Activated T-helper 1 cell treated with anti-CD3 and anti-CD28 coated beads, Interleukin-12 subunit alpha, Interleukin-12 subunit beta, Interleukin-2, Interleukin-4 antibody, amounts not matched to agents 30 ng/mL and 10 ng/mL and 1 ng/mL, durations not matched to agents 14 hours and 24 hours and 36 hours (primary cell): ENCODE measurements at regions of chr1 and their contacts with region 1.

Region 1: DNA sequence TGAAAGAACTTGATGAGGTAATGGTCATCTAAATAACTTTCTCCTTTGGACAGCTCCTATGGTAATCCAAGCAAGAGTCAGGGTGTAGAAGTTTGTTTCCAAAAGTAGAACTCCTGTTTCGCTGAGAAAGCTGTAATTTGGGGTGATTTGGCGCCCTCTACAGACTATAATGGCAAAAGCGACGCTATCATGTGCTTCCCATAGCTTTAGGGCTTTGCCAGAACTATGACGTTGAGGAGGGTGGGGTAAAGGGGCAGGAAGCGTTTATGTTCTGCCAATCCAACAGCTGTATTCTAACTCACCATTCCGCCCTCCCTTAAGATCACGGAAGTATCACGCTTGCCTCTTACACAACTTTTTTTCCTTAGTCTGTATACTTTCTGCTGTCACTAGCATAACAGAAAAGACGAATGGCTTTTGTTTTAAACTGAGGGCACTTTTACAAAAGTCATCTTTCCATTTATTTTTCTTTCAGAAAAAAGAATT is at the start of gene FMO4:
- DNase-seq: peak; percentile 79
- H3K4me3 Mint-ChIP-seq: peak within 1 kb of the TSS; percentile 72
- H3K27ac Mint-ChIP-seq: peak within 1 kb of the TSS; percentile 54
- H3K4me1 Mint-ChIP-seq: peaks cover 15% of the 10 kb centered on the region
- H3K27me3 Mint-ChIP-seq: no peaks in the 10 kb centered on the region
- total RNA-seq, gene FMO4: 0.39 and 1.5 TPM in 2 replicates

Region 2: GRCh38 chr1:170074250-170075157 is 1239.4 kb before region 1 on chr1 and contains the start of gene KIFAP3:
- intact Hi-C with region 1: loop called (anchors 1 kb)
- DNase-seq: peak; percentile 95
- H3K4me3 Mint-ChIP-seq: peak within 1 kb of the TSS; percentile 95
- H3K27ac Mint-ChIP-seq: peak within 1 kb of the TSS; percentile 96
- H3K4me1 Mint-ChIP-seq: peaks cover 45% of the 10 kb centered on the region
- H3K27me3 Mint-ChIP-seq: no peaks in the 10 kb centered on the region
- total RNA-seq, gene KIFAP3: 12.9 and 13.5 TPM in 2 replicates

Region 3: GRCh38 chr1:170531758-170532657 is 781.9 kb before region 1 on chr1 and contains the start of gene GORAB:
- intact Hi-C with region 1: loop called (anchors 10 kb)
- DNase-seq: peak; percentile 82
- H3K4me3 Mint-ChIP-seq: no peak within 1 kb of the TSS
- H3K27ac Mint-ChIP-seq: no peak within 1 kb of the TSS
- H3K4me1 Mint-ChIP-seq: peaks cover 8% of the 10 kb centered on the region
- H3K27me3 Mint-ChIP-seq: peaks cover 4% of the 10 kb centered on the region
- total RNA-seq, gene GORAB: 11.8 and 12.2 TPM in 2 replicates

Region 4: GRCh38 chr1:171081314-171081753 is 232.5 kb before region 1 on chr1:
- intact Hi-C with region 1: loop called (anchors 10 kb)
- DNase-seq: no peak
- H3K4me3 Mint-ChIP-seq: no peak overlapping the region
- H3K27ac Mint-ChIP-seq: no peak overlapping the region
- H3K4me1 Mint-ChIP-seq: no peaks in the 10 kb centered on the region
- H3K27me3 Mint-ChIP-seq: peaks cover 2% of the 10 kb centered on the region

Region 5: DNA sequence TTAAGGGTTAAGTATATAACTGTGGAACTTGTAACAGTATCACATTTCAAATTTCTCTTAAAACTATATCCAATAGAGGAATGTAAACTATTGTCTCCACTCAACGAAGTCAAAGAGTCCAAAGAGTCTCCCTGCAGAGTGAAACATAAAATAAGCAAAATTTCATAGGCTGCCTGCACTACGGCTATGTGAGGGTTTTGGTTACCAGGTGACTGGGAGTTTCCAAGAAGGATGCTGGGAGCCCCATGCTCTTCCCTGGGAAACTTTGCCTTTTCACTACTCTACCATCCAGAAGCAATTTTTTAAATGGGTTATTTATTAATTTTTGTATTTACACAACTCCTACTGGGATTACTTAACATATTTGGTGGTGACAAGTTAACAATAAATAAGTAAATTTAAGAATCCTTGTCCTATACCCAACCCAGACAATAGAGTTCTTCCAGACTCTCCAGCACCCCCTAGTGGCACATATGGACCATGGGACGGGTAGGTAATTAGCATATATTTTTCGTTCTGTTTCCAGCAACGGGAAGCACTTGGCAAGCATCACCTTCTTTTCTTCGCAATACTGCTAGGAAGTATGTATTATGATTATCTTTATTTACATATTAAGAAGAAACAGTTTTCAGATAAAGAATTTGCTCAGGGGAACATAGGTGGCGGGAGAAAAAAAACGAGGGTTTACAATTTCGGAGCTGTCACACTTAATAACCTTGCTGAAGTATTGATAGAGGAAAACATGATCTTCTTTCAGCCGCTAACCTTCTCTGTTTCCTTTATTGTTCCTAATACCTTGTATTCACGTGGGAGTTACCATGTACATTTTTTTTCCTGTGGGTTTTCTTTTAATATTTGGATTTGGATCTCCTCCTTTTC is 125.3 kb before region 1 on chr1:
- intact Hi-C with region 1: loop called (anchors 1 kb)
- DNase-seq: no peak
- H3K4me3 Mint-ChIP-seq: no peak overlapping the region
- H3K27ac Mint-ChIP-seq: no peak overlapping the region
- H3K4me1 Mint-ChIP-seq: no peaks in the 10 kb centered on the region
- H3K27me3 Mint-ChIP-seq: peaks cover 11% of the 10 kb centered on the region

Region 6: DNA sequence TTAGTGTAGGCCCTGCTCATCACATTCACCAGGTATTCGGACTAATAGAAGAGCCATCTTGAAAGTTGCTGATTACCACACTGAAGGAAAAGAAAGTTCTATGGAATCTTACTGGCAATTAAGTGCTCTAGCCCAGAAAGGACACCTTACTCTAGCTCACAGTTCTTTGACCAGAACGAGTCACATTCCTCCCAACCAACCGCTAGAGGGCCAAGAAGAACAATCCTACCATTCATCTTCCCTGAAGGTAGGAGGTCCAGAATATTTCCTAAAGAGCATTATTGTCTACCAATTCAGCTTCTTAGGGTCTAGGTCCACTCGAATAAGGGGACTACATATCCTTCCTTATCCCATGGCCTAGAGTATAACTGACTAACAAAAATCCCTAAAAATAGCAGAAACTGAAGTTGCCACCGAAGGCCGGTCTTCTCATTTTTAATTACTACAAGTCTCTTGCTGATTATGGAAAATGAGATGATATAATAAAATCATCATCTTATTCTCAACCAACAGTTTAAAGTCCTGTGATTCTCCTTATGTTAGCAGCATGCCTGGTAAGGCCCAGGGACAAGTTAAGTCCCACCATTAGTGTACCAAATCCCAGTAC is 68.3 kb before region 1 on chr1:
- intact Hi-C with region 1: loop called (anchors 1 kb)
- DNase-seq: no peak
- H3K4me3 Mint-ChIP-seq: no peak overlapping the region
- H3K27ac Mint-ChIP-seq: no peak overlapping the region
- H3K4me1 Mint-ChIP-seq: no peaks in the 10 kb centered on the region
- H3K27me3 Mint-ChIP-seq: peaks cover 28% of the 10 kb centered on the region

Region 7: GRCh38 chr1:171286032-171286705 is 27.7 kb before region 1 on chr1:
- intact Hi-C with region 1: no loop called
- DNase-seq: no peak
- H3K4me3 Mint-ChIP-seq: no peak overlapping the region
- H3K27ac Mint-ChIP-seq: no peak overlapping the region
- H3K4me1 Mint-ChIP-seq: peaks cover 6% of the 10 kb centered on the region
- H3K27me3 Mint-ChIP-seq: peaks cover 17% of the 10 kb centered on the region

Region 8: DNA sequence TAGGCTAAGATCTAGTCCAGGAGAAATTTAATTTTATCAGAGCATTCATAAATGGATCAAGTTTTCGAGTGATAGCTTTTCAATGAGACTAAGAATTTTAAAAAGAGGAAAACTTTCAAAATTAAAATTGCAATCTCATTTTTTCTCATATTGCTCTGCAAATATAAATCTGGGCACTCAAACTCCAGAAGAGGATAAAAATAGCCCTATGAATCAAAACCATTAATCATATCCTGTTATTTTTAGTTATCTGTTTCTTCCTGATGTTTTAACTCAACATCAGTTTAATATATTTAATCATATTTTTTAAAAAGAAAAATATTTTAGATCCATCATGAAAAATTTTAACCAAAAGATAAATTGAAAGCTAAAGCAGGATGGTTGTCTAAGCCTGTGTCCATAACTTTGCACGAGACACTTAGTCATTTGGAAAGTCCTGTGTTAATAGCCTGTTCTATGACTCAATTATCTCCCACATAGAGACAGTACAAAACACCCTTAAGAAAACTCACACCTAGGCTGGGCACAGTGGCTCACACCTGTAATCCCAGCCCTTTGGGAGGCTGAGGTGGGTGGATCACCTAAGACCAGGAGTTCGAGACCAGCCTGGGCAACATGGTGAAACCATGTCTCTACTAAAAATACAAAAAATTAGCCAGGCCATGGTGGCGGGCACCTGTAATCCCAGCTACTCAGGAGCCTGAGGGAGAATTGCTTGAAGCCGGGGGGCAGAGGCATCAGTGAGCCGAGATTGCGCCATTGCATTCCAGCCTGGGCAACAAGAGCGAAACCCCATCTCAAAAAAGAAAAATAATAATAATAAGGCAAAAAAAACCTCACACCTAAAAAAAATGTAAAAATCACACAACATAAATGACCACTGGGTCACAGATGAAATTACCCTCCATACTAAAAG is 154.5 kb after region 1 on chr1:
- intact Hi-C with region 1: no loop called
- DNase-seq: no peak
- H3K4me3 Mint-ChIP-seq: no peak overlapping the region
- H3K27ac Mint-ChIP-seq: no peak overlapping the region
- H3K4me1 Mint-ChIP-seq: no peaks in the 10 kb centered on the region
- H3K27me3 Mint-ChIP-seq: peaks cover 9% of the 10 kb centered on the region

Region 9: GRCh38 chr1:172172352-172172831 is 858.5 kb after region 1 on chr1:
- intact Hi-C with region 1: loop called (anchors 10 kb)
- DNase-seq: no peak
- H3K4me3 Mint-ChIP-seq: no peak overlapping the region
- H3K27ac Mint-ChIP-seq: no peak overlapping the region
- H3K4me1 Mint-ChIP-seq: no peaks in the 10 kb centered on the region
- H3K27me3 Mint-ChIP-seq: no peaks in the 10 kb centered on the region